ENCODE measurements at regions of chr4 and their contacts with region 1.

Region 1: GRCh38 chr4:67746797-67747495 is 7.2 kb downstream of the GNRHR start:
- DNase-seq: peak in 5 of 9 donors; percentile 27 to 48 (median 41)
- ATAC-seq: no peak
- H3K4me3 ChIP-seq: no peak overlapping the region
- H3K4me3 Mint-ChIP-seq: no peak overlapping the region
- H3K27ac ChIP-seq: no peak overlapping the region
- H3K27ac Mint-ChIP-seq: no peak overlapping the region
- H3K4me1 ChIP-seq: no peaks in the 10 kb centered on the region
- H3K4me1 Mint-ChIP-seq: peaks cover 0 to 14% (median 0%) of the 10 kb centered on the region in 7 donors
- H3K27me3 ChIP-seq: no peaks in the 10 kb centered on the region
- H3K27me3 Mint-ChIP-seq: no peaks in the 10 kb centered on the region

Region 2: GRCh38 chr4:67762086-67762485 is 15.1 kb after region 1 on chr4:
- CTCF ChIA-PET with region 1: interaction called, 4 read pairs
- POLR2A ChIA-PET with region 1: no interaction called
- intact Hi-C with region 1: loop called in 1 of 2 experiments (anchors 1 kb)
- DNase-seq: peak in 3 of 9 donors; percentile 0 to 11 (median 2)
- ATAC-seq: no peak
- H3K4me3 ChIP-seq: no peak overlapping the region
- H3K4me3 Mint-ChIP-seq: peak overlapping the region in 1 of 10 donors; percentile 38
- H3K27ac ChIP-seq: no peak overlapping the region
- H3K27ac Mint-ChIP-seq: peak overlapping the region in 2 of 9 donors; percentile 18 to 54
- H3K4me1 ChIP-seq: no peaks in the 10 kb centered on the region
- H3K4me1 Mint-ChIP-seq: peaks cover 4 to 6% (median 4%) of the 10 kb centered on the region in 7 donors
- H3K27me3 ChIP-seq: no peaks in the 10 kb centered on the region
- H3K27me3 Mint-ChIP-seq: no peaks in the 10 kb centered on the region

Region 3: GRCh38 chr4:67909905-67910584 is 163.1 kb after region 1 on chr4:
- CTCF ChIA-PET with region 1: interaction called, 3 read pairs
- POLR2A ChIA-PET with region 1: no interaction called
- intact Hi-C with region 1: loop called in 1 of 2 experiments (anchors 5 kb)
- DNase-seq: peak in 5 of 9 donors; percentile 7 to 18 (median 13)
- ATAC-seq: no peak
- H3K4me3 ChIP-seq: no peak overlapping the region
- H3K4me3 Mint-ChIP-seq: no peak overlapping the region
- H3K27ac ChIP-seq: no peak overlapping the region
- H3K27ac Mint-ChIP-seq: no peak overlapping the region
- H3K4me1 ChIP-seq: no peaks in the 10 kb centered on the region
- H3K4me1 Mint-ChIP-seq: peaks cover 0 to 2% (median 0%) of the 10 kb centered on the region in 7 donors
- H3K27me3 ChIP-seq: no peaks in the 10 kb centered on the region
- H3K27me3 Mint-ChIP-seq: peaks cover 3 to 26% (median 13%) of the 10 kb centered on the region in 5 donors